ENCODE measurements at regions of chr1 and their contacts with region 1.

Region 1: DNA sequence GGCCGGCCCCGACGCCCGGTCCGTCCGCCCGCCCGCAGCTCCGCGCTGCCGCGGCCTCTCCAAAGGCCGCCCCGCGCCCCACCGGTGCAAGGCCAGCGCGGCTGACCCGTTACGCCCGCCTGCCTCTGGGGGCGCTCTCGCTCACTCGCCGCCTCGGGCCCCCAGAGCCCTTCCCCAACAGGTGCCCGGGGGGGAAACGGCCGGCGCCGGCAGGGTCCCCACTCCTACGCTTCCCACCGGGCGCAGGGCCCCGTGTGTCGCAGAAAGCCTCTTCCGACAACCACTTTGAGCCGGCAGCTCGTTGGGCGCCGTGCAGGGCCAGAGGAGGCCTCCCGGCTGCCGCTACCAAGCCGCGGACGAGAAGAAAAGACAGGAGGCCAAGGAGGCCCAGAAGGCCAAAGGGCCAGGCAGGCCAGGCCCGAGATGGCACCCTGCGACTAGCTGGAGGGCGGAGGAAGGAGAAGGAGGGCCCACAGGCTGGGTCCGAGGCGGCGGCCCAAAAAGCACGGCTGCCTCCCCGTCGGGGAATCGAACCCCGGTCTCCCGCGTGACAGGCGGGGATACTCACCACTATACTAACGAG is 64.9 kb upstream of the FCGR2A start:
- DNase-seq: peak; percentile 84
- ATAC-seq: peak; percentile 52
- H3K4me3 Mint-ChIP-seq: peak overlapping the region; percentile 85
- H3K27ac Mint-ChIP-seq: no peak overlapping the region
- H3K4me1 Mint-ChIP-seq: no peaks in the 10 kb centered on the region
- H3K27me3 Mint-ChIP-seq: peaks cover 63% of the 10 kb centered on the region
- CTCF ChIP-seq: peak; percentile 64

Region 2: GRCh38 chr1:161139765-161140164 is 300.6 kb before region 1 on chr1:
- CTCF ChIA-PET with region 1: no interaction called
- POLR2A ChIA-PET with region 1: no interaction called
- DNase-seq: peak; percentile 30
- ATAC-seq: peak; percentile 59; the same call in 1 of the 2 replicates
- H3K4me3 Mint-ChIP-seq: no peak overlapping the region
- H3K27ac Mint-ChIP-seq: no peak overlapping the region
- H3K4me1 Mint-ChIP-seq: peaks cover 8% of the 10 kb centered on the region
- H3K27me3 Mint-ChIP-seq: no peaks in the 10 kb centered on the region
- CTCF ChIP-seq: 0 out of 2 replicates have a peak, but pooled peaks have one; percentile 26

Region 3: DNA sequence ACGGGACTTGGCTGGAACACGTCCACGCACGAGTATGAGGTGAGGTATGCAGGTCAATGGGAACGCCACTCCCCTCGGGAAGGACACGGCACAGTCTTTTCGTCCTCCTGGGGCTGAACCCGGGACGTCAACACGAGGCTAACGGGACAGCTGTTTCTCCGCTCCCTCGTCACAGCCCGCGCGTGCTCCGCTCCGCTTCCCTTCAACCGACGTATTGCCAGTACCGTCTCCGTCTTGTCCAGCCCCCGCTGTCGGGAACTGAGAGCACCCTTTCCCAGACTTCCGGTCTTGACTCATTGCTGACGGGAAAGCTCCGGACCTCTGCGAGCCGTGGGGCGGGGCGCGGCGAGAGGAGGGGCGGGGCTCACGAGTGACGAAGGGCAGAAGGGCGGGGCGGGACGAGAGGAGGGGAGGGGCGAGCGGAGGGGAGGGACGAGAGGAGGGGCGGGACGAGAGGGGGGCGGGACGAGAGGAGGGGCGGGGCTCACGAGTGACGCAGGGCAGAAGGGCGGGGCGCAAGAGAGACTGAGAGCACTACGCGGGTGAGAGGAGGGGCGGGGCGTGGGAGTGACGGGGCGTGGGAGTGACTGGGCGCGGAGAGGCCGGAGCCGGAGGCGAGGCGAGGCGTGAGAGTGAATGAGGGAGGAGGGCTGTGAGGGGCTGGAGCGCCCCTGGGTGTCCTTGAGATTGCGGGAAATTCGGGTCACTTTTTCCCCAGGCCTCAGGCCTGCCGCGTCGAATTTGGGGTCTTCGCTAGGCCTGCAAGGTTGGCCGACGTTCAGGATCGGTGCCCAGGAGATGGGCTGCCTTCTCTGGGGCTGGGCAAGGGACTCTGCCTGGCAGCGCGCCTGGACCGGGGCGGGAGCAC is 50.5 kb before region 1 on chr1:
- CTCF ChIA-PET with region 1: interaction called, 22 read pairs
- POLR2A ChIA-PET with region 1: no interaction called
- DNase-seq: peak; percentile 91
- ATAC-seq: peak; percentile 85
- H3K4me3 Mint-ChIP-seq: peak overlapping the region; percentile 92
- H3K27ac Mint-ChIP-seq: peak overlapping the region; percentile 95
- H3K4me1 Mint-ChIP-seq: peaks cover 17% of the 10 kb centered on the region
- H3K27me3 Mint-ChIP-seq: peaks cover 15% of the 10 kb centered on the region; the same call in 1 of the 2 replicates
- CTCF ChIP-seq: no peak

Region 4: DNA sequence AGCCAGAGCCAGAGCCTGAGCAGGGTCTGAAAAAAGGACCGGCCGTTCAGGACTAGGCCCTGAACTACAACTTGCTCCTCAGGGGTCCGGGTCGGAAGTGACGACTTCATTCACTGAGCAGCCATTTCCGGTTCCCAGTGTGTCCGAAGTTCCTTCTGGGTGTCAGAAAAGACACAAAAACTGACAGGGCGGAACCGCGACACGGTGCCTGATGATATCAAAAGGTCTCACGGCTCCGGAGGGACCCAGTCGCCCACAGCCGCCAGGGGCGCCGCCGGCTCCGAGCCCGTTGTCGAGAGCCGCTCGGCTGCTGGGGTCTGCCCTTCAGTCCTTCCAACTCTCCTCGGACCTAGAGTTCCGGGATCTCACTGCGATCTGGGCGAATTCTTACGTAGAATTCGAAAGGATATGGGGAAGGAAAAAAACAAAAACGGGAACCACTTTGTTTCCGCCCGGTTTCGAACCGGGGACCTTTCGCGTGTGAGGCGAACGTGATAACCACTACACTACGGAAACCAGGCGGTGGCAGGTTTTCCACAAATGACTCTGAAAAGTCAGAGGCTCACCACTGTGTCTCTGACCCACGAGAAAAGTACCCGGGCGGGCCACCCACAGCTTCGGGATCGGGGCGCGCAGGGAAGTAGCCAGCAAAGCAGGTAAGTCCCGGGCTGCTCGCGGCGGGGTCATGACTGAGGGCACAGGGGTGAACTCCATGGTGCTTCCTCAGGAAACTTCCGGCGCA is 41.0 kb before region 1 on chr1:
- CTCF ChIA-PET with region 1: interaction called, 14 read pairs
- POLR2A ChIA-PET with region 1: interaction called, 3 read pairs
- DNase-seq: peak; percentile 81
- ATAC-seq: peak; percentile 86
- H3K4me3 Mint-ChIP-seq: peak overlapping the region; percentile 95
- H3K27ac Mint-ChIP-seq: peak overlapping the region; percentile 100
- H3K4me1 Mint-ChIP-seq: peaks cover 10% of the 10 kb centered on the region
- H3K27me3 Mint-ChIP-seq: peaks cover 11% of the 10 kb centered on the region; the same call in 1 of the 2 replicates
- CTCF ChIP-seq: 0 out of 2 replicates have a peak, but pooled peaks have one; percentile 24

Region 5: DNA sequence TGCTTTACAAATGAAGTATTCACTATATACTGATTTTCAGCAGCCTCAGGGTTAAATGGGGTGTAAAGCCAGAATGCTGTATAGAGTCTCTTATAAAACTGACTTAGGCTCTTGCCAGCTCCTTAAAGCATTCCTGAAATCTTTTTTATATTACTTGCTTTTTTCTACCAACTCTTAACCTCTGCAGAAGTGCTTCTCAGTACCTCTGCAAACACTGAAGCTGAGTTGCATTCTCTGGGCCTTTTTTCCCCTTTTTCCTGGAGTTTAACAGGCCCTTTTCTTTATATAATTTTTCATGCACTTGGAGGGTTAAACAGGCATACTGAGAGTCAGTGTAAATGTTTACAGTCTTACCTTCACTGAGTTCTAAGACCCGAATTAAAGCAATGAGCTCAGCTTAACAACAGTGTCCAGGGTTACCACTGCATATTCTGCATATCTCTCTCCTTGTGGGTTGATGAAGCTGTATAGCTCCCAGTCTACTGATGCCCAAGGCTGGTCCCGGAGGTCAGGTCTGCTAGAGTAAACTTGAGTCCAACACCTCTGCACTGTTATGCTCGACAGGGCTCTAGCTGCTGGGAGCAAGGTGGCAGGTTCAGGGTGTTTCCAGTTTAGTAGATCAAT is 31.9 kb before region 1 on chr1:
- CTCF ChIA-PET with region 1: interaction called, 17 read pairs
- POLR2A ChIA-PET with region 1: interaction called, 3 read pairs
- DNase-seq: no peak
- ATAC-seq: no peak
- H3K4me3 Mint-ChIP-seq: peak overlapping the region; percentile 31; the same call in 1 of the 2 replicates
- H3K27ac Mint-ChIP-seq: peak overlapping the region; percentile 65; the same call in 1 of the 2 replicates
- H3K4me1 Mint-ChIP-seq: peaks cover 37% of the 10 kb centered on the region
- H3K27me3 Mint-ChIP-seq: no peaks in the 10 kb centered on the region; the same call in 1 of the 2 replicates
- CTCF ChIP-seq: no peak

Region 6: GRCh38 chr1:161427733-161428516 is 12.5 kb before region 1 on chr1:
- CTCF ChIA-PET with region 1: interaction called, 47 read pairs
- POLR2A ChIA-PET with region 1: interaction called, 6 read pairs
- DNase-seq: peak; percentile 69
- ATAC-seq: peak; percentile 84
- H3K4me3 Mint-ChIP-seq: peak overlapping the region; percentile 96
- H3K27ac Mint-ChIP-seq: peak overlapping the region; percentile 95
- H3K4me1 Mint-ChIP-seq: peaks cover 9% of the 10 kb centered on the region
- H3K27me3 Mint-ChIP-seq: peaks cover 48% of the 10 kb centered on the region
- CTCF ChIP-seq: no peak

Region 7: GRCh38 chr1:161484613-161485012 is 44.2 kb after region 1 on chr1:
- CTCF ChIA-PET with region 1: no interaction called
- POLR2A ChIA-PET with region 1: no interaction called
- DNase-seq: no peak
- ATAC-seq: no peak
- H3K4me3 Mint-ChIP-seq: no peak overlapping the region
- H3K27ac Mint-ChIP-seq: no peak overlapping the region
- H3K4me1 Mint-ChIP-seq: peaks cover 8% of the 10 kb centered on the region
- H3K27me3 Mint-ChIP-seq: peaks cover 8% of the 10 kb centered on the region
- CTCF ChIP-seq: no peak

Measured in WTC11 (cell line).